Left lung (tissue), 14 donors: ENCODE measurements at regions of chr1 and their contacts with region 1.

Region 1: DNA sequence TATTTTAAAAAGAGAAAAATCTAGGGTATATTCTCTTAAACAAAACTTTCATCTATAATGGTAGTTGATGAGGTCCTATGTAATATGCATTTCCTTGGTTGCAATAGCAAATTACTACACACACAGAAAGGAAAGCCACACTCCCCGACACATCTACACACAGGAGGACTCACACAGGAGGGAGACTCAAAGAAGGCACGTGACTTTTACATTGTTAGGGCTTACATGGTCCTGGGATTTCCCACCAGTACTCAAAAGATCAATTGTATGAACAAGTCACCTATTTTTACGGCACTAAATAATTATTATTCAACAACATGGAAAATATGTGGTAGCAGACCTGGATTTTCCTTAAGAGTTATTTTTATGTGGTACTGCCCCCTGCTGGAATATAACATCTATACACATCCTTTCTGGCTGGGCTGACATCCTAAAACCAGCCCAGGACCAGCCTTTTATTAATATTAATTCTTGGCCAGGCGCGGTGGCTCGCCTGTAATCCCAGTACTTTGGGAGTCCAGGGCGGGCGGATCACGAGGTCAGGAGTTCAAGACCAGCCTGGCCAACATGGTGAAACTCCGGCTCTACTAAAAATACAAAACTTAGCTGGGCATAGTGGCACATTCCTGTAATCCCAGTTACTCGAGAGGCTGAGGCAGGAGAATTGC is 33.9 kb upstream of the LGALS8 start:
- DNase-seq: peak in 2 of 4 donors; percentile 42 to 64
- ATAC-seq: peak; percentile 88
- H3K4me3 ChIP-seq: no peak overlapping the region
- H3K27ac ChIP-seq: no peak overlapping the region
- H3K4me1 ChIP-seq: no peaks in the 10 kb centered on the region
- H3K27me3 ChIP-seq: no peaks in the 10 kb centered on the region
- CTCF ChIP-seq: peak; percentile 52 to 76

Region 2: DNA sequence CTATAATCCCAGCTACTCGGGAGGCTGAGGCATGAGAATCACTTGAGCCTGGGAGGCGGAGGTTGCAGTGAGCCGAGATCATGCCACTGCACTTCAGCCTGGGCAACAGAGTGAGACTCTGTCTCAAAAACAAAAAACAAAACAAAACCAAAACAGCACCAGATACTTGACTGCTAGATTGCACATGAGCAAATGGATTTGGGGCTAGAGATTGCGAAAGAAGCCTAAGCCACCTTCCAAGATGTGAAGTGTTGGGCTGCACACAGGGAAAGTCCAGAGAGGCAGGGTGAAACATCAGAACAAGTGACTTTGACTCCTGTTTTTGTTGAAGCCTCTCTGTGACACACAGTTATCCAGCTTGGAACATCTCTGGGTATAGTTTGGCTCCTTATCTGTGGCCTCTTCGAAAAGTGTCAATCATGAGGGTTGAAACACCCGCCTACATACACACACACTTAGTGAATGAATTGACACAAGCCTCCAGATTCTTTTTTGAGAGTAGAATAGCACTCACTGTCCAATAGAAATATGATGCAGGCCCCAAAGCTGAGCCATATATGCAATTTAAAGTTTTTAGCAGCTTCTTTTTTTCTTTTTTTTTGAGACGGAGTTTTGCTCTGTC is 381.7 kb before region 1 on chr1:
- intact Hi-C with region 1: loop called in 1 of 2 experiments (anchors 5 kb)
- DNase-seq: no peak
- ATAC-seq: no peak
- H3K4me3 ChIP-seq: no peak overlapping the region
- H3K27ac ChIP-seq: no peak overlapping the region
- H3K4me1 ChIP-seq: no peaks in the 10 kb centered on the region
- H3K27me3 ChIP-seq: peaks cover 0 to 3% of the 10 kb centered on the region in 2 donors
- CTCF ChIP-seq: no peak

Region 3: DNA sequence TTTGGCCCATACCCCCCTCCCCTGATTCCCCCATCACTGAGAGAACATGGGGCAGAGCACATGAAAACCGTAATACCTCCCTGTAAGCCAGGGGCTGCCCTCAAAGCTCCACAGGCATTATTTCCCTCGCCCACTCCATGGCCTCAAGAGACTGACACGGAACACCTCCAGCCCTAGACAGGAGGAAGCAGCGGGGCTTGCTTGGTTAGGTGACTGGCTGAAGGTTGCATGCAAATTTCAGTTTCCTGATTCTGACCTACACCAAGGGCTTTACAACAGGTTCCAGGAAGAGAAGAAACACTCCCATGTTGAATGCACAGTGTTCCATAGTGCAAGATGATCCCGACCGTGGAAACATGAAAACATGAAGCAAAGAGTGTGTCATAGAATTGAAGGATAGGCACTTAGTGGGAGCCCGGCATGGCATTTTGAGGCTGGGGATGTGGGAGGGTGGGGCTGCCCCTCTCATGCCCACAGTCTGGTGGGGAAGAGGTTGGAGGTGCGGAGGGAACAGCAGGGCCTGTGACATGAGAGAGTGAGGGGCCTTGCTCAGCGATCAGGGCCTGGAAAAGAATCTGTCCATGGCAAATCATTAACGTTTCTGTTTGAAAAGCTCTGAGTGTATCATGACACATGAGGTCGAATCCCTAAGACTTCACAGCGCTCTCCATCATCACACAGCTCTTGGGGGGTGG is 314.1 kb before region 1 on chr1:
- intact Hi-C with region 1: no loop called
- DNase-seq: no peak
- ATAC-seq: no peak
- H3K4me3 ChIP-seq: no peak overlapping the region
- H3K27ac ChIP-seq: no peak overlapping the region
- H3K4me1 ChIP-seq: no peaks in the 10 kb centered on the region
- H3K27me3 ChIP-seq: no peaks in the 10 kb centered on the region
- CTCF ChIP-seq: no peak